ENCODE measurements at regions of chr11 and their contacts with region 1.

Region 1: GRCh38 chr11:35804451-35805035 is 139.3 kb upstream of the LDLRAD3 start:
- DNase-seq: no peak
- ATAC-seq: no peak
- H3K4me3 ChIP-seq: no peak overlapping the region
- H3K4me3 Mint-ChIP-seq: no peak overlapping the region
- H3K27ac ChIP-seq: no peak overlapping the region
- H3K27ac Mint-ChIP-seq: no peak overlapping the region
- H3K4me1 ChIP-seq: no peaks in the 10 kb centered on the region
- H3K4me1 Mint-ChIP-seq: peaks cover 0 to 11% (median 7%) of the 10 kb centered on the region in 3 donors
- H3K27me3 ChIP-seq: no peaks in the 10 kb centered on the region
- H3K27me3 Mint-ChIP-seq: no peaks in the 10 kb centered on the region

Region 2: DNA sequence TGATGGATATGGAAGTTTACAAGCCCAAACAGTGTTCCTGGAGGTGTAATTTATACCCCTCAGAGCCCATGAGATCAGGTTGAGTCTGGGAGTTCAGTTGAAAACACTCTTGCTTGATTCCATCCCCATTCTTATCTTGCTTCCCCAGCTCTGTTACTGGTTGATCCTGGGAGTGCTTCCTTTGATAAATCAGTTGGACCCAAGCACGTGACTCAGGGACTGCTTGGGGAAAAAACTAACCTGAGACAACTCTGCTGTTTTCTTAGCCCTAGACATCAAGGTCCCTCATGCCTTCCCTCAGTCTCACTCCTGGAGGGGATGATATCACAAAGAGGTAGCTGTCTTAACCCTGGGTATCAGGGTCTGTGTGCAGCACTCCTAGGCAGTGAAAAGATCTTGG is 350.2 kb before region 1 on chr11:
- CTCF ChIA-PET with region 1: no interaction called
- POLR2A ChIA-PET with region 1: interaction called in 1 of 2 experiments, 16 read pairs
- DNase-seq: no peak
- ATAC-seq: no peak
- H3K4me3 ChIP-seq: no peak overlapping the region
- H3K4me3 Mint-ChIP-seq: no peak overlapping the region
- H3K27ac ChIP-seq: no peak overlapping the region
- H3K27ac Mint-ChIP-seq: no peak overlapping the region
- H3K4me1 ChIP-seq: no peaks in the 10 kb centered on the region
- H3K4me1 Mint-ChIP-seq: no peaks in the 10 kb centered on the region
- H3K27me3 ChIP-seq: peaks cover 2 to 5% of the 10 kb centered on the region in 2 experiments
- H3K27me3 Mint-ChIP-seq: peaks cover 28 to 38% of the 10 kb centered on the region in 2 donors

Region 3: GRCh38 chr11:35688023-35688422 is 116.5 kb before region 1 on chr11:
- CTCF ChIA-PET with region 1: no interaction called
- POLR2A ChIA-PET with region 1: no interaction called
- DNase-seq: no peak
- ATAC-seq: no peak
- H3K4me3 ChIP-seq: no peak overlapping the region
- H3K4me3 Mint-ChIP-seq: no peak overlapping the region
- H3K27ac ChIP-seq: no peak overlapping the region
- H3K27ac Mint-ChIP-seq: no peak overlapping the region
- H3K4me1 ChIP-seq: no peaks in the 10 kb centered on the region
- H3K4me1 Mint-ChIP-seq: peaks cover 26 to 32% (median 30%) of the 10 kb centered on the region in 3 donors
- H3K27me3 ChIP-seq: no peaks in the 10 kb centered on the region
- H3K27me3 Mint-ChIP-seq: no peaks in the 10 kb centered on the region

Measured in T-cell (primary cell).